CD4-positive, alpha-beta T cell (primary cell): ENCODE measurements at regions of chr1 and their contacts with region 1.

Region 1: DNA sequence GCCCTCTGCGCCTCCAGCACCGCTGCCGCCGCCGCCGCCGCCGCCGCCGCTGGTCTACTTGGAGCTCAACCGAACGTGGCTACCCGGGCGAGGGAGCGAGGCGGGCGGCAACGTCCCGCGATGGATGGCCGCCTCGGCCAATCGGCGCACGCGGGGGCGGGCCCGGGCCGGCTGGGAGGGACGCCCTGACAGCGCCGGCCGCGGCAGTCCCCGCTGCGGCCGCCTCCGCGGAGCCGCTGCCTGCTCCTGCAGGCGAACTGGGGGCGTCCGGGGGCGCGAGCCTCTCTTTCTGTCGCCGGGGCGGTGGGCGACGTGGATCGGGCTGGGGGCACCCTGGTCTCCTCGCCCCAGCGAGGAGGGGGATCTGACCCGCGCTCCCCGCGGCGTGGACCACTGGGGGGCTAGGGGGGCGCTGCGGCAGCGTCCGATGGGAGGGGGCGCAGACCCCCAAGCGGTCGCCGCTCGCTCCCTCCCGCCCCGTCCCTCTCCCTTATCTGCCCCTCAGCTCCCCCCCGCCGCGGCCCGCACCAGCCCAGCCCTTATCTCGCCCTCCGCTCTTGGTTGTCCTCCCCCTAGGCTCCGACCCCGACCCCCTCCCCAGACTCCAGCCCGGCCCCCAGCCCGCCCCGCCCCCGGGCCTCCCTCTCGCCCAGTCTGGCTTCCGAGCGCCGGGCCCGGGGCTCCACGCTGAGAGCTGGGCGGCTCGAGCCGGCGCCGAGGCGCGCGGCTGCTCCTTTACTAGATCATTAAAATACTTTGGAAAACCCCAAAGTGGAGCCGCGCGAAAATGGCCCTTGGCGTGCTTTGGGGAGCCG is at the start of gene SSBP3:
- DNase-seq: peak; percentile 82 to 97 (median 90)
- ATAC-seq: peak; percentile 92
- H3K4me3 ChIP-seq: peak within 1 kb of the TSS; percentile 74
- H3K4me3 Mint-ChIP-seq: peak within 1 kb of the TSS; percentile 97
- H3K27ac ChIP-seq: peak within 1 kb of the TSS; percentile 60 to 90
- H3K27ac Mint-ChIP-seq: peak within 1 kb of the TSS; percentile 92
- H3K4me1 ChIP-seq: peaks cover 67% of the 10 kb centered on the region
- H3K4me1 Mint-ChIP-seq: peaks cover 73% of the 10 kb centered on the region
- H3K27me3 ChIP-seq: no peaks in the 10 kb centered on the region
- H3K27me3 Mint-ChIP-seq: no peaks in the 10 kb centered on the region
- CTCF ChIP-seq: no peak
- total RNA-seq, gene SSBP3: 50.6 to 52.4 TPM

Region 2: DNA sequence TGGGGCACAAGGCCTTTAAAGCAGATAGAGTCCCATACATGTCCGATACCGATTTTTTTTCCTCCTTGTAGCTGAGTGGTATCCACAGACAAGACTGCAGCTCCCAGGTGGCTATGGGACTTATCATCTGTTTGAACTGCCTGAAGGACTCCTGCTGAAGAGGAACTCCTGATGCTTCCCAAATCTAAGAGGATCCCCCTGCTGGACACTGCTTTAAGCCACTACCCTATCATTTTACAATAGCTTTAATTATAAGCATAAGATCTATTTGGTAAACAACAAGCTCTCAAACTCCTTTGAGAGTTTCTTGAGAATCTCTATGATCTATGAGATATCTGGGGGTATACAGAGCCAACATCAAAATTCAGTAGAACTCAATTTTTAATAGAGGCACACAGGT is 580.2 kb before region 1 on chr1:
- CTCF ChIA-PET with region 1: no interaction called
- POLR2A ChIA-PET with region 1: no interaction called
- intact Hi-C with region 1: no loop called
- DNase-seq: no peak
- ATAC-seq: no peak
- H3K4me3 ChIP-seq: no peak overlapping the region
- H3K4me3 Mint-ChIP-seq: no peak overlapping the region
- H3K27ac ChIP-seq: no peak overlapping the region
- H3K27ac Mint-ChIP-seq: no peak overlapping the region
- H3K4me1 ChIP-seq: no peaks in the 10 kb centered on the region
- H3K4me1 Mint-ChIP-seq: no peaks in the 10 kb centered on the region
- H3K27me3 ChIP-seq: no peaks in the 10 kb centered on the region
- H3K27me3 Mint-ChIP-seq: no peaks in the 10 kb centered on the region
- CTCF ChIP-seq: no peak

Region 3: DNA sequence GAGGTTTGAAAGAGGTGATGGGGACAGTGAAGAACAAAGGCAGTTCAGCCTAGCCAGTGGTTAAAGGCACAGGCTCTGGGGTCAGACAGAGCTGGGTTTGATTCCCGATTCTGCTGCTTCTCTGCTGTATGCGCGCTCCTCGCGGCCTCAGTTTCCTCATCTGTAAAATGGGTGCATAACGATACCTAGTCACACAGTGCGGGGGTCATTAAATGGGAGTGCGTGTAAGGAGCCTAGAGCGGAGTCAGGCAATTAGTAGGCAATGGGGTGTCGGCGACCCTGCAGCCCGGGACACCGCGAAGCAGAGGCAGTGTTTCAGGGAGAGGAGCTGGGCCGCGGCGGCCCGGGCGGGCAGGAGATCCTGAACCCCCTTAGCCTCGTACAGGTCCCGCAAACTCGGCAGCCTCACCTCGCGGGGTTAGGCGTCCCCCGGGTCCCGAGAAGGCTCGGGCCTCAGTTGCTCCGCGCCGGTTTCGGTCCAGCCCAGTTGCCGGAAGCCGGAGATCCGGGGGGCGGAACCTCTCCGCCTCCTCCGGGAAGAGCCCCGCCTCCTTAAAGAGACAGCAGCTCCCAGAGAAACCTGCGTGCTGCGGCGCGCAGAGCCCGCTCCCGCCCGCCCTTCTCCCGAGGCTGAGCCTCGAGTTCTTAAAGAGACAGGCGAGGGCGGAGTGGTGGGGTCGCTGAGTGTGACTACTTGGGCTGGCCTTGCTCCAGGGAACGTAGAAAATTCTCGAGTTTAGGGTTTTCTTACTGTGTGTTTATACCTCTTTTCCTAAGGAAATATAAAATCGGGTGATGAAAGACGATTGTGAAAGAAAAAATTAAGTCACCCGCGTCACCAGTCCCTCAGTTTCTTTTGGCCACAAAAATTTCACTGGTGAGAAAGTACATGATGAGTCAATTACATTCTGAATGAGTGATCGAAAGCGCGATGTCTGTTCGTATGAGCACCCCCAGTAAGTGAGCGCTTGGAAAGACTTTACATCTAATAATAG is 516.9 kb before region 1 on chr1 and contains the start of gene YIPF1:
- CTCF ChIA-PET with region 1: no interaction called
- POLR2A ChIA-PET with region 1: interaction called, 6 read pairs
- intact Hi-C with region 1: loop called in 1 of 2 experiments (anchors 2 kb)
- DNase-seq: peak; percentile 69 to 92 (median 84)
- ATAC-seq: peak; percentile 99
- H3K4me3 ChIP-seq: peak within 1 kb of the TSS; percentile 98
- H3K4me3 Mint-ChIP-seq: peak within 1 kb of the TSS; percentile 94
- H3K27ac ChIP-seq: peak within 1 kb of the TSS; percentile 29 to 45
- H3K27ac Mint-ChIP-seq: peak within 1 kb of the TSS; percentile 93
- H3K4me1 ChIP-seq: peaks cover 18% of the 10 kb centered on the region
- H3K4me1 Mint-ChIP-seq: peaks cover 44% of the 10 kb centered on the region
- H3K27me3 ChIP-seq: no peaks in the 10 kb centered on the region
- H3K27me3 Mint-ChIP-seq: no peaks in the 10 kb centered on the region
- CTCF ChIP-seq: no peak
- total RNA-seq, gene YIPF1: 4.3 to 5.5 TPM

Region 4: DNA sequence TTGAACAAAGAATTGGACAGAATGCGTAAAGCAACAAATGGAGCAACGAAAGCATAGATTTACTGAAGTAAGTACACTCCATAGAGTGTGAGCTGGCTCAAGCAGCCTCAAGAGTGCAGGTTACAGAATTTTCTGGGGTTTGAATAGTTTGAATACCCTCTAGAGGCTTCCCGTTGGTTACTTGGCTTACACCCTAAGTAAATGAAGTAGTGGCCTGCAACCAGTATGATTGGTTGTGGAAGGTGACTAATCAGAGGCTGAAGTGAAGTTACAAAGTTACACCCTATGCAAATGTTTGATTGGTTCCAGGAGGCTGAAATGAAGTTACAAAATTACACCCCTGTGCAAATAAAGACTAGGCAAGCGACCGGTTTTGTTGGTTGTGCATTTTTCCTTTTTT is 342.2 kb before region 1 on chr1:
- CTCF ChIA-PET with region 1: no interaction called
- POLR2A ChIA-PET with region 1: no interaction called
- intact Hi-C with region 1: loop called (anchors 2 to 10 kb)
- DNase-seq: no peak
- ATAC-seq: no peak
- H3K4me3 ChIP-seq: no peak overlapping the region
- H3K4me3 Mint-ChIP-seq: no peak overlapping the region
- H3K27ac ChIP-seq: no peak overlapping the region
- H3K27ac Mint-ChIP-seq: no peak overlapping the region
- H3K4me1 ChIP-seq: no peaks in the 10 kb centered on the region
- H3K4me1 Mint-ChIP-seq: no peaks in the 10 kb centered on the region
- H3K27me3 ChIP-seq: no peaks in the 10 kb centered on the region
- H3K27me3 Mint-ChIP-seq: no peaks in the 10 kb centered on the region
- CTCF ChIP-seq: no peak

Region 5: GRCh38 chr1:54287176-54287650 is 119.3 kb before region 1 on chr1:
- CTCF ChIA-PET with region 1: interaction called, 3 read pairs
- POLR2A ChIA-PET with region 1: interaction called, 11 read pairs
- intact Hi-C with region 1: loop called (anchors 1 to 5 kb)
- DNase-seq: peak; percentile 32 to 81 (median 64)
- ATAC-seq: peak; percentile 76
- H3K4me3 ChIP-seq: no peak overlapping the region
- H3K4me3 Mint-ChIP-seq: peak overlapping the region; percentile 83
- H3K27ac ChIP-seq: peak overlapping the region; percentile 28 to 62
- H3K27ac Mint-ChIP-seq: peak overlapping the region; percentile 90
- H3K4me1 ChIP-seq: peaks cover 92% of the 10 kb centered on the region
- H3K4me1 Mint-ChIP-seq: peaks cover 91% of the 10 kb centered on the region
- H3K27me3 ChIP-seq: no peaks in the 10 kb centered on the region
- H3K27me3 Mint-ChIP-seq: no peaks in the 10 kb centered on the region
- CTCF ChIP-seq: no peak

Region 6: GRCh38 chr1:54459726-54460191 is 53.2 kb after region 1 on chr1:
- CTCF ChIA-PET with region 1: no interaction called
- POLR2A ChIA-PET with region 1: interaction called, 24 read pairs
- intact Hi-C with region 1: no loop called
- DNase-seq: peak in 3 of 14 experiments; percentile 16 to 48 (median 26)
- ATAC-seq: peak; percentile 9
- H3K4me3 ChIP-seq: no peak overlapping the region
- H3K4me3 Mint-ChIP-seq: peak overlapping the region; percentile 66
- H3K27ac ChIP-seq: peak overlapping the region; percentile 55 to 56
- H3K27ac Mint-ChIP-seq: peak overlapping the region; percentile 83
- H3K4me1 ChIP-seq: peaks cover 41% of the 10 kb centered on the region
- H3K4me1 Mint-ChIP-seq: peaks cover 45% of the 10 kb centered on the region
- H3K27me3 ChIP-seq: no peaks in the 10 kb centered on the region
- H3K27me3 Mint-ChIP-seq: no peaks in the 10 kb centered on the region
- CTCF ChIP-seq: no peak

Region 7: GRCh38 chr1:54715493-54716298 is 309.1 kb after region 1 on chr1 and contains the start of gene TTC4:
- CTCF ChIA-PET with region 1: no interaction called
- POLR2A ChIA-PET with region 1: no interaction called
- intact Hi-C with region 1: loop called in 1 of 2 experiments (anchors 5 kb)
- DNase-seq: peak; percentile 67 to 93 (median 81)
- ATAC-seq: peak; percentile 97
- H3K4me3 ChIP-seq: peak within 1 kb of the TSS; percentile 87
- H3K4me3 Mint-ChIP-seq: peak within 1 kb of the TSS; percentile 93
- H3K27ac ChIP-seq: peak within 1 kb of the TSS; percentile 43 to 71
- H3K27ac Mint-ChIP-seq: peak within 1 kb of the TSS; percentile 74
- H3K4me1 ChIP-seq: peaks cover 18% of the 10 kb centered on the region
- H3K4me1 Mint-ChIP-seq: peaks cover 40% of the 10 kb centered on the region
- H3K27me3 ChIP-seq: no peaks in the 10 kb centered on the region
- H3K27me3 Mint-ChIP-seq: no peaks in the 10 kb centered on the region
- CTCF ChIP-seq: no peak
- total RNA-seq, gene TTC4: 7.3 to 7.6 TPM